Activated CD8-positive, alpha-beta T cell treated with anti-CD3 and anti-CD28 coated beads, Interleukin-2, amount 10 ng/mL, durations not matched to agents 7 days and 5 days (primary cell): ENCODE measurements at regions of chr9 and their contacts with region 1.

Region 1: DNA sequence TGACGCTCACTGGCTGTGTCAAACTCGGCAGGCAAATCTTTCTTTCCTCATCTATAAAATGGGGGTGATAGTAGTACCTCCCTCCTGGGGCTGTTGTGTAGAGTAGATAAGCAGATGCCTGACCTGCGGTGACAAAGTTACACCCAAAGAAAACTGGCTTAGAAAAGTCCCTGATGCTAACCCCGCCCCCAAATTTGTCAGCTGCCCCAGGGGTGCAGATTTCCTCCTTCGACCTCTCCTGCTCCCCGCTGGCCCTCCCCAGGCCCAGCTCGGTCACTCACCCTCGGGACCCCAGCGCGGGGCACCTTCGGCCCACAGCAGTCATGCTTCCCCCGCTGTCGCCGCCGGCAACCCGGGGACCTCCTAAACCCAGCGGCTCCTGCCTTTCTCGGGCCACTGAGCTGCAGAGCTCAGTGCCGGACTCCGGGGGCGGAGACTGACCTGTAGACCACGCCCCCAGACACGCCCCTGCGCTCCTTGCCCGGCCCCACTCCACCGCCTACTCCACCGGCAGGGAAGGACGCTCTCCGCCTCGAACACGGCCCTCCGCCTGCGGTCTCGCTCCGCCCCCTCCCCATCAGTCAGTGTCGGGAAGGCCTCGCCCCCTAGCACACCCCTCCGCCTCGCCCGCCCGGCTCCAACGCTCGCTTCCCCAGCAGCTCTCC is 7.4 kb downstream of the SH2D3C start:
- DNase-seq: peak; percentile 98
- ATAC-seq: peak; percentile 92
- H3K4me3 Mint-ChIP-seq: peak overlapping the region; percentile 89
- H3K27ac Mint-ChIP-seq: peak overlapping the region; percentile 85
- H3K4me1 Mint-ChIP-seq: peaks cover 86% of the 10 kb centered on the region
- H3K27me3 Mint-ChIP-seq: no peaks in the 10 kb centered on the region

Region 2: GRCh38 chr9:127723450-127723849 is 47.6 kb before region 1 on chr9:
- CTCF ChIA-PET with region 1: no interaction called
- POLR2A ChIA-PET with region 1: no interaction called
- DNase-seq: no peak
- ATAC-seq: no peak
- H3K4me3 Mint-ChIP-seq: no peak overlapping the region
- H3K27ac Mint-ChIP-seq: no peak overlapping the region
- H3K4me1 Mint-ChIP-seq: peaks cover 26% of the 10 kb centered on the region
- H3K27me3 Mint-ChIP-seq: no peaks in the 10 kb centered on the region

Region 3: GRCh38 chr9:127785023-127785932 is 14.2 kb after region 1 on chr9:
- CTCF ChIA-PET with region 1: interaction called, 102 read pairs
- POLR2A ChIA-PET with region 1: interaction called, 27 read pairs
- DNase-seq: peak; percentile 93
- ATAC-seq: peak; percentile 46
- H3K4me3 Mint-ChIP-seq: peak overlapping the region; percentile 77
- H3K27ac Mint-ChIP-seq: peak overlapping the region; percentile 95
- H3K4me1 Mint-ChIP-seq: peaks cover 75% of the 10 kb centered on the region
- H3K27me3 Mint-ChIP-seq: no peaks in the 10 kb centered on the region